PC-3 (cell line): ENCODE measurements at regions of chr10 and their contacts with region 1.

Region 1: DNA sequence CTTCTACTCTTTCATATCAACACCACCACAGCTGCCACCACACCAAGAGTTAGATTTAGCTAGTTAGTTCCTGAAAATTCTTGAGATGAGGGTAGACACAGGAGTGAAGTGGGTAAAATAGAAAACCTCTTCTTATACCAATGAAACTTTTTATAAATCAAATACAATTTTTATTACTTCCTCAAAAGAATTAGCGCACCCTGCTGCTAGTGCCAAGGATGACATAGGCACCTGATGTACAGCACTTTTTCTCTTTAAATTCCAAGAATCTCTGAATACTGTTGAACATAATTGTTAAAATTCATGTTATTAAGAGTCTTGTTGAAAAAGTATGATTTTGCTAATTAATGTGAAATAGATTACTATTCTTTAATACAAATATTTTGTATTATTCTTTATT is 11.4 kb downstream of the ZWINT start:
- DNase-seq: peak; percentile 63
- ATAC-seq: 0 out of 2 replicates have a peak, but pooled peaks have one; percentile 16
- H3K4me3 ChIP-seq: no peak overlapping the region
- H3K27ac ChIP-seq: no peak overlapping the region
- H3K4me1 ChIP-seq: peaks cover 13% of the 10 kb centered on the region
- H3K27me3 ChIP-seq: no peaks in the 10 kb centered on the region
- CTCF ChIP-seq: peak; percentile 87

Region 2: DNA sequence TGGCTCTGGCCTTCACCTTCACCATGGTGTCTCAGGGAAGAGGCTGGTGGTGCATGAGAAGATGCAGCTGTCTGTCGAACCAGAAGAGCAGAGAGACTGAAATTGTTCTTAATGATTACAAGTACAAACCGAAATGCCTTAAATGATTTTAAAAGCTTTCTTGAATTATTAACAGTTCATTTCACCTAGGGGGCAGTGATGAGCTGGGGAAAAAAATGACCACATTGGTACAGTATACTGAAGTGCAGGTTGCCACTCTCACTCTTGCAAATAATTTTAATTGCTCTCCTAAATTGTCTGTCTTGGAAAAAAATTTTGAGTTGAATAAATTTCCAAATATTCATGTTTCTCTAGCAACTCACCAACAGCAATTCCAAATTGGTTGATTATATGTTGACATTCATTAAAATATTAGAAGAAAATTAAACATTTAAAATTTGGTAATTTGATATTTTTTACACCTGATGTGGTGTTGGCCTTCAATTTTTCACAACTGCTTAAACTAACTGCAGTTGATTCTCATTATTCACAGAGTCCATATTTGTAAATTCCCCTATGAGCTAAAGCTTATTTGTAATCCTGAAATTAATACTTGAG is 681.2 kb before region 1 on chr10:
- CTCF ChIA-PET with region 1: no interaction called
- POLR2A ChIA-PET with region 1: no interaction called
- intact Hi-C with region 1: loop called (anchors 5 kb)
- DNase-seq: peak; percentile 76
- ATAC-seq: peak; percentile 81
- H3K4me3 ChIP-seq: no peak overlapping the region
- H3K27ac ChIP-seq: no peak overlapping the region
- H3K4me1 ChIP-seq: no peaks in the 10 kb centered on the region
- H3K27me3 ChIP-seq: no peaks in the 10 kb centered on the region
- CTCF ChIP-seq: peak; percentile 84

Region 3: GRCh38 chr10:55742487-55742886 is 607.1 kb before region 1 on chr10:
- CTCF ChIA-PET with region 1: no interaction called
- POLR2A ChIA-PET with region 1: no interaction called
- intact Hi-C with region 1: loop called (anchors 5 kb)
- DNase-seq: no peak
- ATAC-seq: no peak
- H3K4me3 ChIP-seq: no peak overlapping the region
- H3K27ac ChIP-seq: no peak overlapping the region
- H3K4me1 ChIP-seq: peaks cover 10% of the 10 kb centered on the region; the same call in 1 of the 2 replicates
- H3K27me3 ChIP-seq: no peaks in the 10 kb centered on the region
- CTCF ChIP-seq: no peak

Region 4: DNA sequence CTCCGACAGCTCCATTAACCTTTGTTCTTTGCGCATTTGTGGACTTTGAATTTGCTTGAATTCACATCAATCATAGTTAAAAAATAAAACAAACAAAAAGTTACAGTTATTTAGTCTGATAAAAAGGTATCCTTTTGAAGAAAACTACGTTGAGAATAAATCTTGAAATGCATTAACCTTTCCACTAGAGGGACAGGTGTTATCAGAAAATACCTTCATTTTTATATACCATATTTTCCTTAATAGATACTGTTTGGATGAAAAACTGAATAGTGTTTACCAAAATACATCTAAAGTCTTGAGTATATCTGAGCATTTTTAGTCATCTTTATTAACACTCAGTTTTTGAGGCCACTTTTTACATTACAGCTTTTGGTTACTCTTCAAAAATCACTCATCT is 360.4 kb before region 1 on chr10:
- CTCF ChIA-PET with region 1: no interaction called
- POLR2A ChIA-PET with region 1: no interaction called
- intact Hi-C with region 1: loop called (anchors 2 kb)
- DNase-seq: peak; percentile 32
- ATAC-seq: peak; percentile 33; the same call in 1 of the 2 replicates
- H3K4me3 ChIP-seq: no peak overlapping the region
- H3K27ac ChIP-seq: no peak overlapping the region
- H3K4me1 ChIP-seq: no peaks in the 10 kb centered on the region
- H3K27me3 ChIP-seq: no peaks in the 10 kb centered on the region
- CTCF ChIP-seq: peak; percentile 71

Region 5: DNA sequence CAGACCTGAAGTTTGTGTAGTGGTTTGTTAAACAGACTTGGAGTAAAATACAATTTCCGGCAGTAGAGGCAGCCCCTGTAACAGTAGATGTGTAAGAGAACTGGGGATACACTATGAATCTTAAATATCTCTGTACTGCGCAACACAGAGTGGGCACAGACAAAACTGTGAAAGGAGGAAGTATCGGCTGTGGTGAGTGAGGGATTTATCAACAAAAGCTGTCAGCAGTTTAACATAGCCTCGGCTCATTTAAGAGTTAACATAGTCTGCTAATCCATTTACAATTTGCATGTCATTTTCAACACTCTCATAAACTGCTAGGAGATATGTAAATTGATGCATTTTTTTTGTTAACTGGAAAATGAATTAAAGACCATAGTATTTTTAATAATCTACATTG is 213.8 kb before region 1 on chr10:
- CTCF ChIA-PET with region 1: no interaction called
- POLR2A ChIA-PET with region 1: no interaction called
- intact Hi-C with region 1: loop called (anchors 10 kb)
- DNase-seq: no peak
- ATAC-seq: no peak
- H3K4me3 ChIP-seq: no peak overlapping the region
- H3K27ac ChIP-seq: no peak overlapping the region
- H3K4me1 ChIP-seq: no peaks in the 10 kb centered on the region
- H3K27me3 ChIP-seq: no peaks in the 10 kb centered on the region
- CTCF ChIP-seq: no peak